Body of pancreas (tissue), 4 donors: ENCODE measurements at regions of chr14 and their contacts with region 1.

Region 1: DNA sequence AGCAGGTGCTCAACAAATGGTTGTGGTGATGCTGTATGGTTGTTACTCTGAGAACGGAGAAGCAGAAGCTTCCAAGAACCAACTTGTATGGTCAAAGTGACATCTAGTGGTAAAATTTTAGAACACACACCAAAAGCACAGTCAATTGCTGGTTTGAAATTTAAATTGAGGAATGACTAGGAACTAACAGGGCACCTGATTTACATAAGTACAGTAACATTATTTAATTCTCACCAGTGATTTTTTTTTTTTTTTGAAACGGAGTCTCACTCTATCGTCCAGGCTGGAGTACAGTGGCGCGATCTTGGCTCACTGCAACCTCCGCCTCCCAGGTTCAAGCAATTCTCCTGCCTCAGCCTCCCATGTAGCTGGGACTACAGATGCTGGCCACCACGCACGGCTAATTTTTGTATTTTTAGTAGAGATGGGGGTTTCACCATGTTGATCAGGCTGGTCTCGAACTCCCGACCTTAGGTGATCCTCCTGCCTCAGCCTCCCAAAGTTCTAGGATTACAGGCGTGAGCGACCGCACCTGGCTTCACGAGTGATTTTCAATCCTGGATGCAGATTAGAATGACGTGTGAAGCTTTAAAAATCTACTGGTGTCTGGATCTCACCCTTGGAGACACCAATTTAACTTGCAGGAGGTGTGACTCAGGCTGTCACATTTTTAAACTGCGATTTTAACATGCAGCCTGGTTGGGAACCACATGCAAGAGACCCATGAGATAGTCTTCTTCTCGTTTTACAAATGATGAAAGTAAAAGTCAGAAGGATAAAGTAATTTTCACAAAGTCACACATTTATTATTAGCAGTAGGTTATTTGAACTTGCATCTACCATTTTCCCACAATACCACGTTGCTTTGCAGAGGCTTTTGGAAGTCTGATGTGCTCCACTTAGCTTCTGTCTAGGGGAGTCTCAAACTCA is 14.1 kb upstream of the NUMB start:
- DNase-seq: peak in 1 of 4 donors; percentile 28
- ATAC-seq: peak; percentile 86
- H3K4me3 ChIP-seq: no peak overlapping the region
- H3K27ac ChIP-seq: no peak overlapping the region
- H3K4me1 ChIP-seq: no peaks in the 10 kb centered on the region
- H3K27me3 ChIP-seq: no peaks in the 10 kb centered on the region
- CTCF ChIP-seq: peak in 6 of 7 experiments; percentile 55 to 93 (median 87)
- POLR2A ChIP-seq: no peak

Region 2: GRCh38 chr14:73290279-73290678 is 182.2 kb before region 1 on chr14:
- intact Hi-C with region 1: loop called (anchors 5 kb)
- DNase-seq: no peak
- ATAC-seq: no peak
- H3K4me3 ChIP-seq: no peak overlapping the region
- H3K27ac ChIP-seq: no peak overlapping the region
- H3K4me1 ChIP-seq: peaks cover 7% of the 10 kb centered on the region
- H3K27me3 ChIP-seq: no peaks in the 10 kb centered on the region
- CTCF ChIP-seq: no peak
- POLR2A ChIP-seq: no peak